HCT116 (cell line): ENCODE measurements at regions of chr4 and their contacts with region 1.

Region 1: GRCh38 chr4:185587427-185588161 is 52.3 kb upstream of the PDLIM3 start:
- DNase-seq: no peak
- ATAC-seq: no peak
- H3K4me3 ChIP-seq: no peak overlapping the region
- H3K27ac ChIP-seq: no peak overlapping the region
- H3K4me1 ChIP-seq: peaks cover 6 to 18% of the 10 kb centered on the region in 2 experiments; a peak in 3 of 4 replicates
- H3K27me3 ChIP-seq: no peaks in the 10 kb centered on the region
- CTCF ChIP-seq: no peak
- POLR2A ChIP-seq: no peak
- RAD21 ChIP-seq: no peak

Region 2: GRCh38 chr4:185471235-185472102 is 116.1 kb before region 1 on chr4 and contains the start of gene CCDC110:
- CTCF ChIA-PET with region 1: no interaction called
- POLR2A ChIA-PET with region 1: no interaction called
- RAD21 ChIA-PET with region 1: no interaction called
- intact Hi-C with region 1: loop called (anchors 2 kb)
- DNase-seq: peak; percentile 80
- ATAC-seq: peak; percentile 95
- H3K4me3 ChIP-seq: peak within 1 kb of the TSS; percentile 71
- H3K27ac ChIP-seq: peak within 1 kb of the TSS; percentile 42; the same call in 1 of the 2 replicates
- H3K4me1 ChIP-seq: peaks cover 2 to 12% of the 10 kb centered on the region in 2 experiments; a peak in 3 of 4 replicates
- H3K27me3 ChIP-seq: no peaks in the 10 kb centered on the region
- CTCF ChIP-seq: peak; percentile 33 to 51 (median 50); a peak in 5 of 6 replicates
- POLR2A ChIP-seq: no peak
- RAD21 ChIP-seq: peak; percentile 75
- total RNA-seq, gene CCDC110: 2.7 TPM

Region 3: DNA sequence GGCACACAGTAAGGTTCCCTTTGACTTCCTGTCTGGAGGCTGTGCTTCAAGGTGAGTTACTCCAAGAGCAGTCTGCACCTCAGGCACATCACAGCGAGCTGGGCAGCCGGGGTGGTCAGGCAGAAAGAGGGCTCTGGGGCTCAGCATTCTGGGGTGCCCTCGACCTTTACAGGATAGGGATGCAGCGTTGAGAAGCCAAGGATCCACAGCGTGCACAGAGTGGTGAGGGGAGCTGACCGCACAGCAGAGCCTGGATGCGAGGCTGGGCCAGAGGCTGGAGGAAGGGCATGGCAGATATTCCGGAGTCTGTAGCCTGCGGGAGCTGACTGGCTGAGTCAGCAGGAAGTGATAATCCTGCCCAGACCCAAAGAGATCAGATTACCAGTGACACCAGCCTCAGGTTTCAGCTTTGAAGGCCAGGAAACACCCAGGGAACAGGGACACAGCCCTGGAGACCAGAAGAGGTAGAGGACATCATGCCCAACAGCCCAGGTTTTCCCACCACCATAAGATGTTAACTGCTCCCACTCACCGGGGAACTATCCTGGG is 13.9 kb before region 1 on chr4:
- CTCF ChIA-PET with region 1: no interaction called
- POLR2A ChIA-PET with region 1: interaction called, 10 read pairs
- RAD21 ChIA-PET with region 1: no interaction called
- intact Hi-C with region 1: no loop called
- DNase-seq: peak; percentile 91
- ATAC-seq: peak; percentile 98
- H3K4me3 ChIP-seq: peak overlapping the region; percentile 53 to 64
- H3K27ac ChIP-seq: peak overlapping the region; percentile 68
- H3K4me1 ChIP-seq: peaks cover 8 to 19% of the 10 kb centered on the region in 2 experiments
- H3K27me3 ChIP-seq: no peaks in the 10 kb centered on the region
- CTCF ChIP-seq: no peak
- POLR2A ChIP-seq: peak; percentile 72
- RAD21 ChIP-seq: peak; percentile 27

Region 4: GRCh38 chr4:186039697-186040096 is 452.1 kb after region 1 on chr4:
- CTCF ChIA-PET with region 1: no interaction called
- POLR2A ChIA-PET with region 1: no interaction called
- RAD21 ChIA-PET with region 1: no interaction called
- intact Hi-C with region 1: no loop called
- DNase-seq: no peak
- ATAC-seq: no peak
- H3K4me3 ChIP-seq: no peak overlapping the region
- H3K27ac ChIP-seq: no peak overlapping the region
- H3K4me1 ChIP-seq: no peaks in the 10 kb centered on the region
- H3K27me3 ChIP-seq: peaks cover 5% of the 10 kb centered on the region
- CTCF ChIP-seq: no peak
- POLR2A ChIP-seq: no peak
- RAD21 ChIP-seq: no peak